A673 (cell line): ENCODE measurements at regions of chr6 and their contacts with region 1.

Region 1: DNA sequence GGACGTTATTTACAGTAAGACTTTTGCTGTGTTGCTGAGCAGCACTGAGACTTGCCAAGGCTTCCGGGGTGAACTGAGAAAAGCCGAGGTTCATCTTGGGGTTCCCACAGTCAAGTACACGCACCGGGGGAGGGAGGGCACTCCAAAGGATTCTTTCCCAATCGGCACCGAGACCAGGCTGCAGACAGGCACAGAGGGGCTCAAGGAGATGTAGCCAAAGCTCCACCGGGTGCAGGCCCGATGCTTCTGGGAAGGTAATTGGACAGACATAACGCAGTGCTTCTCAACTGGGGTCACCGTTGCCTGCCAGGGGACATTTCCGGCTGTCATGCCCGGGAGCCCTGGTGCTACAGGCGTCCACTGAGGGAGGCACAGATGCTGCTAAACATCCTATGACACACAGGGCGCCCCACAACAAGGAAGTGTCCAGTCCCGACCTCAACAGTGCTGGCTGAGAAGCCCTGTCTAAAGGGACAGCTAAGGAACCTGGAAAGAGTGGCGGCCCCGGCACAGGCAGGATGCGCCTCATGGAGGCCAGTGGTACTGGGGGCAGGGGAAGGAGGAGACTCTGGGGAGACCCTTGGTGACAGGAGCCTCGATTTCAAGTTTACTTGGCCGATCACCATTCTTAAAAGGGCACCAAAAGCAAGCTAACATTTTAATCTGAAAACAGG is 92.9 kb downstream of the RAMACL start:
- DNase-seq: no peak
- H3K4me3 ChIP-seq: no peak overlapping the region
- H3K27ac ChIP-seq: no peak overlapping the region
- H3K4me1 ChIP-seq: peaks cover 20% of the 10 kb centered on the region
- H3K27me3 ChIP-seq: no peaks in the 10 kb centered on the region
- CTCF ChIP-seq: no peak

Region 2: GRCh38 chr6:166849749-166850183 is 356.2 kb after region 1 on chr6:
- CTCF ChIA-PET with region 1: no interaction called
- POLR2A ChIA-PET with region 1: interaction called, 12 read pairs
- intact Hi-C with region 1: no loop called
- DNase-seq: no peak
- H3K4me3 ChIP-seq: no peak overlapping the region
- H3K27ac ChIP-seq: no peak overlapping the region
- H3K4me1 ChIP-seq: no peaks in the 10 kb centered on the region
- H3K27me3 ChIP-seq: no peaks in the 10 kb centered on the region
- CTCF ChIP-seq: no peak